Mammary epithelial cell (primary cell): ENCODE measurements at regions of chr10 and their contacts with region 1.

Region 1: GRCh38 chr10:100038561-100039071 is 28.9 kb upstream of the DNMBP start:
- DNase-seq: no peak
- H3K4me3 ChIP-seq: no peak overlapping the region
- H3K27ac ChIP-seq: no peak overlapping the region
- H3K4me1 ChIP-seq: peaks cover 16% of the 10 kb centered on the region
- H3K27me3 ChIP-seq: no peaks in the 10 kb centered on the region
- CTCF ChIP-seq: no peak

Region 2: DNA sequence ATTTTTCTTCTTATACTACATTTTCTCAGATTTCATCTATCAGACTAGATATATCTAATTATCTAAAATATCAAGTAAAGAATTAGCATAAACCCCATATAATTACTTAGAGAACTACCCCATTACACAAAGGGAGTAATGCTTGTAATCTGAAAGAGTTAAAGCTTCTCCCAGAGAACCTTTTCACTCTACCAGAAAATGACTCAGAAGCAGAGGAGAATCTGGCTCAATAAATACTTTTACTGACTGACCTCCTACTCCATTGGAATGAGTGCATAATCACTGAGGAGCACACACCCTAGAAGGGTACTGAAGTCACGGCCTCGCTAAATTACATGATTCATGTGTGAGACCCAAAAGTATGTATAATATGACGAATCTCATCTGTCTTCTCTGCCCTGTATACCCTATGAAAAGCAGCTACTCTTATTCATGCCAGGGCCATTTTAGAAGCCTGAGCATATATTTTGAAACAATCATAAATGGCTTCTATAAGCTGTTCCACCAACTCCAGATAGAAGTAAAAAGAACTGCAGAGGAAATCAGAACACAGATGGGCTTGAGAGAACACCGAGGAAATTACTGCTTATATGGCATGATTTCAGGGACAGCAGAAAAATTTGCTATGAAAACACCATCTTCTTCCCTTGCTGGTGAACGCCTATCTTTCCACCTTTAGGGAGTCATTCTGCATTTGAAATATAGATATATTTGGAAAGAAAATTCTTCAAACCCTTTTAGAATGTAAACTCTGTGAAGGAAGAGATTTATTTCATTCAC is 61.5 kb before region 1 on chr10:
- CTCF ChIA-PET with region 1: no interaction called
- dilution Hi-C with region 1: loop called (anchors 10 kb)
- in situ Hi-C with region 1: no loop called
- intact Hi-C with region 1: no loop called
- DNase-seq: peak; percentile 96
- H3K4me3 ChIP-seq: peak overlapping the region in 1 of 3 experiments; percentile 25
- H3K27ac ChIP-seq: peak overlapping the region; percentile 95
- H3K4me1 ChIP-seq: peaks cover 32% of the 10 kb centered on the region
- H3K27me3 ChIP-seq: no peaks in the 10 kb centered on the region
- CTCF ChIP-seq: no peak

Region 3: GRCh38 chr10:100020142-100020885 is 18.3 kb before region 1 on chr10:
- CTCF ChIA-PET with region 1: no interaction called
- dilution Hi-C with region 1: no loop called
- in situ Hi-C with region 1: no loop called
- intact Hi-C with region 1: no loop called
- DNase-seq: no peak
- H3K4me3 ChIP-seq: no peak overlapping the region
- H3K27ac ChIP-seq: no peak overlapping the region
- H3K4me1 ChIP-seq: no peaks in the 10 kb centered on the region
- H3K27me3 ChIP-seq: no peaks in the 10 kb centered on the region
- CTCF ChIP-seq: no peak